ENCODE measurements at regions of chr10 and their contacts with region 1.

Region 1: GRCh38 chr10:114245121-114245791 is 6.2 kb downstream of the VWA2 start:
- DNase-seq: peak; percentile 88
- H3K4me3 Mint-ChIP-seq: peak overlapping the region; percentile 53
- H3K27ac Mint-ChIP-seq: peak overlapping the region; percentile 24
- H3K4me1 Mint-ChIP-seq: peaks cover 31% of the 10 kb centered on the region
- H3K27me3 Mint-ChIP-seq: no peaks in the 10 kb centered on the region
- CTCF ChIP-seq: no peak

Region 2: GRCh38 chr10:114202812-114203211 is 42.4 kb before region 1 on chr10:
- CTCF ChIA-PET with region 1: no interaction called
- POLR2A ChIA-PET with region 1: no interaction called
- intact Hi-C with region 1: no loop called
- DNase-seq: no peak
- H3K4me3 Mint-ChIP-seq: no peak overlapping the region
- H3K27ac Mint-ChIP-seq: no peak overlapping the region
- H3K4me1 Mint-ChIP-seq: no peaks in the 10 kb centered on the region
- H3K27me3 Mint-ChIP-seq: no peaks in the 10 kb centered on the region
- CTCF ChIP-seq: no peak

Region 3: GRCh38 chr10:114266520-114266919 is 21.3 kb after region 1 on chr10:
- CTCF ChIA-PET with region 1: interaction called, 3 read pairs
- POLR2A ChIA-PET with region 1: interaction called, 43 read pairs
- intact Hi-C with region 1: no loop called
- DNase-seq: peak; percentile 72
- H3K4me3 Mint-ChIP-seq: no peak overlapping the region
- H3K27ac Mint-ChIP-seq: peak overlapping the region; percentile 79
- H3K4me1 Mint-ChIP-seq: peaks cover 27% of the 10 kb centered on the region
- H3K27me3 Mint-ChIP-seq: no peaks in the 10 kb centered on the region
- CTCF ChIP-seq: no peak

Region 4: GRCh38 chr10:114271779-114272167 is 26.5 kb after region 1 on chr10:
- CTCF ChIA-PET with region 1: interaction called, 3 read pairs
- POLR2A ChIA-PET with region 1: interaction called, 43 read pairs
- intact Hi-C with region 1: no loop called
- DNase-seq: peak; percentile 90
- H3K4me3 Mint-ChIP-seq: no peak overlapping the region
- H3K27ac Mint-ChIP-seq: peak overlapping the region; percentile 81
- H3K4me1 Mint-ChIP-seq: peaks cover 25% of the 10 kb centered on the region
- H3K27me3 Mint-ChIP-seq: no peaks in the 10 kb centered on the region
- CTCF ChIP-seq: no peak

Region 5: DNA sequence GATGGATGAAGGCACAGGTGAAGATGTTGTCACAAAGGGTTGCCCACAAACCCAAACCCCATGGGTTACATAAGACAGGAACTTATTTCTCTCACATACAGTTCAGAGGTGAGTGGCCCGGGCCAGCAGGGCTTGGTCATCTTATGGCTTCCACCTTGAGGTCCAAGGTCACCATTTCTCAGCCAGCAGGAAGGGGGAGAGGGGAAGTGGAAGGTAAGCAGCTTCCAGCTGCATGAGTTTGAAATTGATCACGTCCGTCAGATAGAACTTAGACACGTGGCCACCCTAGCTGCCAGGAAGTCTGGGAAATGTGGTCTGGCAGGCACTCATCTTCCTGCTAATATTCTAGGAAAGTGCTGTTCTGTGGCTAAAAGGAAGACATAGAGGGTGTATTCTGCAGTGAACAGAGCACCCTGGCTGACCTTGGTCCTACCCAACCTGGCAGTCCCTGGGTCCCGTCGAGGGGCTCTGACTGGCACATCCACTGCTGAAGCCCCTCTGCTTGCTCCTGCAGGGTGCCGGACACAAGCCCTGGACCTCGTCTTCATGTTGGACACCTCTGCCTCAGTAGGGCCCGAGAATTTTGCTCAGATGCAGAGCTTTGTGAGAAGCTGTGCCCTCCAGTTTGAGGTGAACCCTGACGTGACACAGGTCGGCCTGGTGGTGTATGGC is 43.3 kb after region 1 on chr10:
- CTCF ChIA-PET with region 1: no interaction called
- POLR2A ChIA-PET with region 1: no interaction called
- intact Hi-C with region 1: no loop called
- DNase-seq: no peak
- H3K4me3 Mint-ChIP-seq: no peak overlapping the region
- H3K27ac Mint-ChIP-seq: no peak overlapping the region
- H3K4me1 Mint-ChIP-seq: no peaks in the 10 kb centered on the region
- H3K27me3 Mint-ChIP-seq: no peaks in the 10 kb centered on the region
- CTCF ChIP-seq: no peak